ENCODE measurements at regions of chr12 and their contacts with region 1.

Region 1: DNA sequence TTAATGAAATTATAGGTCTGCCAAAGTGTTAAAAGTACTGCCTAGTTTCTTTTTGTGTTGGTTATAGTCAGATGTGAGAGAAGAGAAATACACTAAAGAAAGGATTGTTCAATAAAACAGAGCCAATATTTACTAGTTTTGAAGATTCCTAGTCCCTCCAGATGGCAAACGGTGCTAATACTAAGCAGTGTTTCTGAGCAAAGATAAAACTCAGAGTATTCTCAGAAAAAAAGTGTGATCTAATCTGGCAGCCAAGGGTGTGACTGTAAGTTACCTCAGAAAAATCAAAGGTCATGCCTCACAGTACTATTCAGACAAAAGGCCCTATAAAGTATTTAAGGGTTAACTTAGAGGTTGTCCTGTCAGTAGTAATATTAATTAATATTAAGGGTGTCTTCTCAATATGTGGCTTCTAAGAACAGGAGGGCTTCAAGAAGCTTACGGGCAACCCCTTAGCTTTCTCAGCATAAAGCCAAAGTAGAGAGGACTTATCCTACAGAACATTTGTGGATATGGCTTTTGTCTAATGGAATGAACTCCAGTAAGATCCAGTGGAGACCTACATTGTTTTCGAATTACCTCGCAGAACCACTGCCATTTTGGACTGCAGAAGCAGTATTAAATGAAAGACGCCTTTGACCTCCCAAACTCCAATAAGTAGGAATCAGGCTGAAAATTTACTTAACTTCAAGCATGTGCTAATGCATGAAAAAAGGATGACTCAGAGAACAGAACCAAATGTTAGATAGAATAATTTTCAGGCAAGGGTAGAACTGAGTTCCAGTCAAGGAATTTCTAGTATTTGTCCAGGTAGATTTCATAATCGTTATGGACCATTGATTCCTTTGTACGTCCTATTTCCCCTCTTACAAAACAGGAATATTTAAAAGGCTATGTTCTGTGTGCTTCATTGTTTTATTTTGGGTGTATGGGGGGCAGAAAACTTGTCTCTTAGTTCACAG is 46.6 kb downstream of the USP15 start:
- DNase-seq: no peak
- H3K4me3 ChIP-seq: no peak overlapping the region
- H3K4me3 Mint-ChIP-seq: peak overlapping the region in 1 of 8 donors; percentile 27
- H3K27ac ChIP-seq: no peak overlapping the region
- H3K27ac Mint-ChIP-seq: peak overlapping the region in 2 of 7 donors; percentile 18 to 72
- H3K4me1 ChIP-seq: peaks cover 21% of the 10 kb centered on the region
- H3K4me1 Mint-ChIP-seq: peaks cover 43 to 70% (median 53%) of the 10 kb centered on the region in 4 donors
- H3K27me3 ChIP-seq: no peaks in the 10 kb centered on the region
- H3K27me3 Mint-ChIP-seq: no peaks in the 10 kb centered on the region

Region 2: GRCh38 chr12:62146318-62146717 is 160.5 kb before region 1 on chr12:
- CTCF ChIA-PET with region 1: no interaction called
- POLR2A ChIA-PET with region 1: no interaction called
- intact Hi-C with region 1: no loop called
- DNase-seq: no peak
- H3K4me3 ChIP-seq: no peak overlapping the region
- H3K4me3 Mint-ChIP-seq: no peak overlapping the region
- H3K27ac ChIP-seq: no peak overlapping the region
- H3K27ac Mint-ChIP-seq: peak overlapping the region in 1 of 7 donors; percentile 37
- H3K4me1 ChIP-seq: no peaks in the 10 kb centered on the region
- H3K4me1 Mint-ChIP-seq: no peaks in the 10 kb centered on the region
- H3K27me3 ChIP-seq: no peaks in the 10 kb centered on the region
- H3K27me3 Mint-ChIP-seq: peaks cover 0 to 4% of the 10 kb centered on the region in 2 donors

Region 3: GRCh38 chr12:62319058-62319457 is 12.2 kb after region 1 on chr12:
- CTCF ChIA-PET with region 1: no interaction called
- POLR2A ChIA-PET with region 1: no interaction called
- intact Hi-C with region 1: loop called (anchors 2 kb)
- DNase-seq: no peak
- H3K4me3 ChIP-seq: no peak overlapping the region
- H3K4me3 Mint-ChIP-seq: no peak overlapping the region
- H3K27ac ChIP-seq: no peak overlapping the region
- H3K27ac Mint-ChIP-seq: peak overlapping the region in 5 of 7 donors; percentile 6 to 66 (median 57)
- H3K4me1 ChIP-seq: peaks cover 12% of the 10 kb centered on the region
- H3K4me1 Mint-ChIP-seq: peaks cover 37 to 47% (median 41%) of the 10 kb centered on the region in 4 donors
- H3K27me3 ChIP-seq: no peaks in the 10 kb centered on the region
- H3K27me3 Mint-ChIP-seq: no peaks in the 10 kb centered on the region